ENCODE measurements at regions of chr9 and their contacts with region 1.

Region 1: GRCh38 chr9:68704814-68705530 is at the start of gene PIP5K1B:
- H3K4me3 ChIP-seq: peak within 1 kb of the TSS; percentile 67
- H3K27ac ChIP-seq: peak within 1 kb of the TSS; percentile 50; the same call in 1 of the 2 replicates
- H3K4me1 ChIP-seq: no peaks in the 10 kb centered on the region
- CTCF ChIP-seq: no peak

Region 2: DNA sequence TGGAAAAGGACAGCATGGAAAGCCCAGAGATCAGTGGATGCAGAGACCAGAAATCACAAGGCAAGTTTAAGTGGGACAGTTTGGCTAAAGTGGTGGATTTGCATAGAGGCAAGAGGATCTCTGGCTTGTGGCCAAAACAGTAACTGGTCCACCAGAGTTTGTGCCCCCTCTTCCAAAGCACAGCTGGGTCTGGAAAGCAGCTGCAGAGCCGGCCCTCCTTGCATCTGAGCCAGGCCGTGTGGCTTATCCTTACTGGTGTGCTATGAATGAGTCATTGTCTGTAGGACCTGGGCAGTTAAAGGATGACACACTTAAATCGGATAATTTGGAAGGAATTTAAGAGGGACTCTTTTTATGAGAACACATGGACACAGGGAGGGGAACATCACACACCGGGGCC is 146.7 kb after region 1 on chr9:
- CTCF ChIA-PET with region 1: no interaction called
- POLR2A ChIA-PET with region 1: interaction called, 11 read pairs
- H3K4me3 ChIP-seq: no peak overlapping the region
- H3K27ac ChIP-seq: no peak overlapping the region
- H3K4me1 ChIP-seq: no peaks in the 10 kb centered on the region
- CTCF ChIP-seq: no peak

Measured in HEK293 (cell line).